SK-N-SH (cell line): ENCODE measurements at regions of chr1 and their contacts with region 1.

Region 1: DNA sequence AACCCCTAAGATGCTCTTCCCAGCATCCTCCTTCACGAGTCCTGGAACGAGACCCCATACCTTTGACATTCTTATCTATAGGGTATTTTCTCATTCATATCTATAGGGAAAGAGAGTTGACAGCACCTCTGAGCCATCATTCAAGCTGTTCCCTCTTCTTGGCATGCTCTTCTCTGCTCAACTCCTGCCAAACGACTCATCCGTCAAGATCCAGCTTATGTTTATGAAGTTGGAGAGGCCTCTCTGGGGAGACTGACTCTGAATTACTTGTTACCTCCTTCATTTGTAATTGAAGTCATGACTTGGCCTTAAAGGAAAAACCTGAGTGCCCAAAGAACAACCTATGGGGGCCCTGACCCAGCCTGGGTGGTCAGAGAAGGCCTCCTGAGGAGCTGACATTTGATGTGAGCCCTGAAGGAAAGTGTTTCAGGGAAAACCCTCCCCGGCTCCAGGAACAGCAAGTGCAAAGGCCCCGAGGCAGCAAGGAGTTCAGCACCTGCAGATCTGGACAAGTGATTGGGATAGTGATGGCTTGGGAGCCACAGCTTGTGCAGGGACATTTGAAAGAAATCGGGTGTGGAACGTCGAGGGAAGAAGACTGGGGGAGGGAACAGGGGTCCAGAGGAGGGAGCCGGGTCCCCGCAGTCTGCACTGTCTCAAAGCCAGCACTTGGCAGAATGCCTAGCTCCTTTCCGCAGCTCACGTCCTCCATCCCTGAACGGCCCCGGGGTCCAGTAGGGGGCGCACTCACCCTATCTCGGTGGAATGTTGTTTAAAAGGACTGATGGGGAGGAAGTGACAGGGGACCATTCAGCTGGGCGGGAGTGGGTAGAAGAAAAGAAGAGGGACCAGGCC is 14.0 kb upstream of the CDA start:
- DNase-seq: peak; percentile 85
- H3K4me3 ChIP-seq: no peak overlapping the region; a peak in 1 of 4 replicates
- H3K27ac ChIP-seq: no peak overlapping the region
- H3K4me1 ChIP-seq: no peaks in the 10 kb centered on the region
- H3K27me3 ChIP-seq: no peaks in the 10 kb centered on the region; the same call in 1 of the 2 replicates
- CTCF ChIP-seq: peak; percentile 80
- EP300 ChIP-seq: no peak
- RAD21 ChIP-seq: peak; percentile 75

Region 2: GRCh38 chr1:20400341-20401177 is 174.4 kb before region 1 on chr1:
- CTCF ChIA-PET with region 1: no interaction called
- POLR2A ChIA-PET with region 1: no interaction called
- DNase-seq: no peak
- H3K4me3 ChIP-seq: no peak overlapping the region
- H3K27ac ChIP-seq: no peak overlapping the region
- H3K4me1 ChIP-seq: no peaks in the 10 kb centered on the region; a peak in 1 of 4 replicates
- H3K27me3 ChIP-seq: no peaks in the 10 kb centered on the region
- CTCF ChIP-seq: no peak
- EP300 ChIP-seq: no peak
- RAD21 ChIP-seq: no peak

Region 3: GRCh38 chr1:20521960-20522861 is 52.7 kb before region 1 on chr1:
- CTCF ChIA-PET with region 1: interaction called, 10 read pairs
- POLR2A ChIA-PET with region 1: no interaction called
- DNase-seq: peak; percentile 69
- H3K4me3 ChIP-seq: peak overlapping the region in 1 of 2 experiments; percentile 48; a peak in 1 of 4 replicates
- H3K27ac ChIP-seq: no peak overlapping the region
- H3K4me1 ChIP-seq: no peaks in the 10 kb centered on the region; a peak in 1 of 4 replicates
- H3K27me3 ChIP-seq: peaks cover 25% of the 10 kb centered on the region; the same call in 1 of the 2 replicates
- CTCF ChIP-seq: peak; percentile 95
- EP300 ChIP-seq: no peak
- RAD21 ChIP-seq: peak; percentile 94

Region 4: DNA sequence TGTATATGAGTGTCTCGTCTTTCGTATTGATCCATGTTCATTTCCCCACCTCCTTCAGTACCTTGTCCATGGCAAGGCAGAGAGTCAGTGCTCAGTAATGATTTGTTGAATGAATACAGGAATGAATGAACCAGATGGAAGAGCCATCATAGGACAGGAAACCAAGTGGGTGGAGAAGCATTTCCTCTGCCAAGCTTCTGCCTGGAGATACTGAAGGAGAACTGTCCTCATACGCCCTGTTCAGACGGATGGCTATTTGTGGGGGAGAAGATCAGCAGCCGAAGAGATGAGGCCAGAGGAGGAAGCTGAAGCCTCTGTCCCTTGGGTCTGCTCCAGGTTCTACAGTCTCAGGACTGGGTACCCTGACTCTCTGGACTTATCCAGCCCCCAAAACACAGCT is 16.7 kb before region 1 on chr1:
- CTCF ChIA-PET with region 1: interaction called, 12 read pairs
- POLR2A ChIA-PET with region 1: no interaction called
- DNase-seq: no peak
- H3K4me3 ChIP-seq: no peak overlapping the region
- H3K27ac ChIP-seq: no peak overlapping the region
- H3K4me1 ChIP-seq: peaks cover 0 to 9% of the 10 kb centered on the region in 2 experiments; a peak in 1 of 4 replicates
- H3K27me3 ChIP-seq: peaks cover 30% of the 10 kb centered on the region; the same call in 1 of the 2 replicates
- CTCF ChIP-seq: no peak
- EP300 ChIP-seq: no peak
- RAD21 ChIP-seq: no peak

Region 5: DNA sequence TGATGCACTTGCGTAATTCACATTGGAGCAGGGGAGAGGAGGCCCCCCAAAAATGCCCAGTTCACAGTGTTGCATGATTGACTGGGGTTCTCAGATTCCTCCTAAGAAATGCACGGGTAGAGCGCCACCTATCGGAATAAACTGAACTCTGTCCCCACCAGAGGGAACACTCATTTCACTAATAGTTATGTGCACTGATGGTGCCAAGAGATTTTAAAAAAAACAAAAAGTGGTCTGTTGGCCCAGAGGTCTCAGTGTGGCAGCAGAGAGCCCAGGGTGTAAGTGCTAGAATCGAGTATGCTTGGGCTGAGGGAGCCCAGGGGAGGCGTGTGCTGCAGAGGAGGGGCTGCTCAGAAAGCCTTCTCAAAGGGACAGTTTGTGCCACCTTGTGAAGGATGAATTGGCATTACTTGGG is 65.3 kb after region 1 on chr1:
- CTCF ChIA-PET with region 1: interaction called, 97 read pairs
- POLR2A ChIA-PET with region 1: no interaction called
- DNase-seq: peak; percentile 79
- H3K4me3 ChIP-seq: no peak overlapping the region; a peak in 1 of 4 replicates
- H3K27ac ChIP-seq: no peak overlapping the region
- H3K4me1 ChIP-seq: no peaks in the 10 kb centered on the region
- H3K27me3 ChIP-seq: no peaks in the 10 kb centered on the region
- CTCF ChIP-seq: peak; percentile 84
- EP300 ChIP-seq: no peak
- RAD21 ChIP-seq: peak; percentile 82

Region 6: DNA sequence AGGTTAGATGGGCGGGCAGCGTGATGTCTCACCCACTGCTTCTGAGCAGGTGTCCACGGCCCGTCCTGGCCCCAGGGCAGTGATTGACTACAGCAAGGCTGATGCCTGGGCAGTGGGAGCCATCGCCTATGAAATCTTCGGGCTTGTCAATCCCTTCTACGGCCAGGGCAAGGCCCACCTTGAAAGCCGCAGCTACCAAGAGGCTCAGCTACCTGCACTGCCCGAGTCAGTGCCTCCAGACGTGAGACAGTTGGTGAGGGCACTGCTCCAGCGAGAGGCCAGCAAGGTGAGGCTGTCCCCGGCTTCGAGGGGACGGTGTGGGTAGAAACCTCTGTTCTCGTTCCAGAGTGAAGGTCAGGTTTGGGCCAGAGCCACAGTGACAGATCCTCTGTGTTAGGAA is 74.0 kb after region 1 on chr1:
- CTCF ChIA-PET with region 1: interaction called, 10 read pairs
- POLR2A ChIA-PET with region 1: no interaction called
- DNase-seq: no peak
- H3K4me3 ChIP-seq: no peak overlapping the region
- H3K27ac ChIP-seq: no peak overlapping the region
- H3K4me1 ChIP-seq: no peaks in the 10 kb centered on the region
- H3K27me3 ChIP-seq: no peaks in the 10 kb centered on the region
- CTCF ChIP-seq: no peak
- EP300 ChIP-seq: no peak
- RAD21 ChIP-seq: no peak